AG04449 (cell line): ENCODE measurements at regions of chr12 and their contacts with region 1.

Region 1: GRCh38 chr12:19915392-19916195 is 452.7 kb upstream of the PDE3A start:
- DNase-seq: no peak
- H3K4me3 ChIP-seq: no peak overlapping the region
- CTCF ChIP-seq: peak; percentile 44

Region 2: DNA sequence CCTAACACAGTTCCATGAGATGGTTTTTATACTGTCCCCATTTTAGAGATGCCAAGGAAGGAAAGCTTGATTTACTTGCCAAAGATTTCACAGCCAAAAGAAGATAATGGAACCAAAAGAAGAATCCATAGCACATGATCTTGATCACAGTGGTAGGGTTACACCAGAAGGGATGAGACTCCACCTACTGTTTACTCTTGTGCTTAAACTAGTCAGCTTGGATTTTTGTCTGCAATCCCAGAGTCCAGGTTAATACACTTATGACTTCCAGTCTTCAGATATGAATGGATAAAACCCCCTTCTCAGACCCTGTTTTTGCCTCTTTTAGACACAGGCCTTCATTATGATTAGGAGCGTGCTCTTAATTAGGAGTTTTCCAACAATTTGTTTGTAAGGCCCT is 22.1 kb before region 1 on chr12:
- CTCF ChIA-PET with region 1: interaction called, 13 read pairs
- POLR2A ChIA-PET with region 1: no interaction called
- DNase-seq: no peak
- H3K4me3 ChIP-seq: no peak overlapping the region
- CTCF ChIP-seq: peak; percentile 33

Region 3: DNA sequence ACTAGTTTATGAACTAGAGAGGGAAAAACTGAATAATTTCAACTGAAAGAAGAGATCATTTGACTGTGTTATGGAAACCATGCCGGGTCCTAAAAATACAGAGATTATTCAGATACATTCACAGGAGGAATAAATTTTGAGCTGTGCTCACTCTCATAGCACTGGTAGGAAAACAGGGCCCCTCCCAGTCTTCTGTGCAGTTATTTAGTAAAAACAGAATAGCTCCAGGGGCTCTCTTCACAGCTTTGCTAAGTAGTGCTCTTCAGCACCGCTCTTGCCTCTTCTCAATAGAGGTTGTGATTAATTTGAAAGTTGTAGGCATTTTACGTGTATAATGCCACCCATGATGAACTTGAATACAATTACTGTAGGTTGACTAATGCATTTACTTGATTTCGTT is 16.8 kb after region 1 on chr12:
- CTCF ChIA-PET with region 1: interaction called, 10 read pairs
- POLR2A ChIA-PET with region 1: no interaction called
- DNase-seq: no peak
- H3K4me3 ChIP-seq: no peak overlapping the region
- CTCF ChIP-seq: no peak

Region 4: GRCh38 chr12:19946549-19946948 is 31.0 kb after region 1 on chr12:
- CTCF ChIA-PET with region 1: interaction called, 14 read pairs
- POLR2A ChIA-PET with region 1: no interaction called
- DNase-seq: peak; percentile 94
- H3K4me3 ChIP-seq: peak overlapping the region; percentile 25
- CTCF ChIP-seq: no peak

Region 5: GRCh38 chr12:20050221-20050620 is 134.6 kb after region 1 on chr12:
- CTCF ChIA-PET with region 1: no interaction called
- POLR2A ChIA-PET with region 1: no interaction called
- DNase-seq: no peak
- H3K4me3 ChIP-seq: no peak overlapping the region
- CTCF ChIP-seq: no peak

Region 6: GRCh38 chr12:20220339-20220738 is 304.7 kb after region 1 on chr12:
- CTCF ChIA-PET with region 1: interaction called, 11 read pairs
- POLR2A ChIA-PET with region 1: no interaction called
- DNase-seq: no peak
- H3K4me3 ChIP-seq: no peak overlapping the region
- CTCF ChIP-seq: peak; percentile 2

Region 7: GRCh38 chr12:20369305-20370005 is 453.9 kb after region 1 on chr12:
- CTCF ChIA-PET with region 1: interaction called, 20 read pairs
- POLR2A ChIA-PET with region 1: no interaction called
- DNase-seq: no peak
- H3K4me3 ChIP-seq: peak overlapping the region; percentile 90
- CTCF ChIP-seq: peak; percentile 31